Transverse colon (tissue), 4 donors: ENCODE measurements at regions of chr14 and their contacts with region 1.

Region 1: DNA sequence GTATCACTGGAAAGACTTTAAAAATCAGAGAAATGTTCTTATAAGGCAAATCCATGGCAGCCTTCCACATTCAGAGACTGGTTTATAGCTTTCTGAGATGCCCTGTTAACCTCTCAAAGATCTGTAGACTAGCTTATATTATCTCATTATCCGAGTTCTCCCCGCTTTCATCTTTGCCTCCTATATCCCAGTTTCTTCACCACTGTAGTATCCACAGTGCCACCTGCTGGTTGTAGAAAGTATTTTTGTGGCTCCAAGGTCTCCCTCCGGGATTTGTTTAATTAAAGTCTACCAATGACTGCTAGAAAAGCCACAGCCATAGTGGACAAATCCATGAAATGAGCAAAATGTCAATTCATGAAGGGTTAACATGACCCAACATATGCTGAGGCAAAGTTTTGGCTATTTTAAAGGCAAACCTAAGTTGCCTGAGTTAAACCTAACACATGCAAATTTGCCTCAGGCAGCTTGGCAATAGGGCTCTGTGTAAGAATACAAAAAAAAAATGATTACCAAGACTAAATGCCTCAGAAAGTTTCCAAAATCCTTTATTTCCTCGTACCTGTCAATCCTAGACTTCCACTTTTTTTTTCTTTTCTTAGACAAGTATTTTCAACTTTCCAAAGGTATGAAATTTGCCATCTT is 218.8 kb upstream of the BMP4 start:
- DNase-seq: peak; percentile 67
- H3K4me3 ChIP-seq: no peak overlapping the region
- H3K27ac ChIP-seq: peak overlapping the region in 2 of 4 donors; percentile 1 to 39
- H3K4me1 ChIP-seq: peaks cover 12 to 34% (median 21%) of the 10 kb centered on the region in 4 donors
- H3K27me3 ChIP-seq: no peaks in the 10 kb centered on the region
- CTCF ChIP-seq: peak; percentile 83 to 89 (median 86)
- EP300 ChIP-seq: no peak
- POLR2A ChIP-seq: no peak

Region 2: GRCh38 chr14:53539489-53540126 is 635.8 kb before region 1 on chr14:
- in situ Hi-C with region 1: loop called in 3 of 4 experiments (anchors 25 kb)
- intact Hi-C with region 1: loop called (anchors 10 kb)
- DNase-seq: peak; percentile 78
- H3K4me3 ChIP-seq: no peak overlapping the region
- H3K27ac ChIP-seq: peak overlapping the region; percentile 53 to 77 (median 57)
- H3K4me1 ChIP-seq: peaks cover 0 to 38% (median 7%) of the 10 kb centered on the region in 4 donors
- H3K27me3 ChIP-seq: no peaks in the 10 kb centered on the region
- CTCF ChIP-seq: peak; percentile 81 to 88 (median 86)
- EP300 ChIP-seq: no peak
- POLR2A ChIP-seq: no peak

Region 3: DNA sequence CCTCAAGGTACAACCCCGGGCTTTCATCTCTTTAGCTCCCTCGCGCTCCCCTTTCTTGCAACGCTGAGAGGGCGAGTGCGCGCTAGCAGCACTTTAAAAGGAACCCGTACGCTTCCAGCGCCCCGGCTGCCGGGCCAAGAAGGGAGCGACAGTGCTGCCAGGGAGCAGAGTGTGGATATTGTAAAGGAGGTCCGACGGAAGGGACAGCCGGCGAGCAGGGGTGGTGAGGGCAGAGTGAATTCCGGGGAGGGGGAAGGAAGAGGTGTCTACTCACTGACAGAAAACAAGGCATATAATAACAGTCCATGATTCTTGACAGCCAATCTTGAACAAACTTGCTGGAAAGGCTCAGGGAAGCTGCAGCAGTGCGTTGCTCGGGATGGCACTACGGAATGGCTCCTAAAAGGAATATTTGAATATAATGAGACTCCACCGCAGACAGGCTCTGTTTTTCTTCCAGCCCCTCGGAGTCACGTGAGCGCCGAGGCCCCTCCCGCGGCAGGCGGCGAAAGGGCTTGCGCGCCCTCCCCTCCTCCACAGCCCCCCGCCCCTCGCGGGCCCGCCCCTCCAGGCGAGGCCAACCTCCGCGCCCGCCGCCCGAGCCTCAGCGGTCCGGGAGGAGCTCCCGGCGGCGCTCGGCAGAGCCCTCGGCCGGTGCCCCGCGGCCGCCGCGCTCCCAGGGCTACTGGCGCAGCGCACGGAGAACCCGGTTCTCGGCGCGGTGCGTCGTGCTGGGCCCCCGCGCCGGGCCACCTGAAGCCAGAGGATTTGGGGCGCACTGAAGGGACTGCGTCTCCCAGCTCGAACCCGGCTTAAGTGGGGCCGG is 222.2 kb before region 1 on chr14:
- in situ Hi-C with region 1: no loop called
- intact Hi-C with region 1: loop called (anchors 10 kb)
- DNase-seq: peak; percentile 78
- H3K4me3 ChIP-seq: peak overlapping the region; percentile 54 to 71 (median 57)
- H3K27ac ChIP-seq: peak overlapping the region; percentile 80 to 89 (median 83)
- H3K4me1 ChIP-seq: peaks cover 4 to 43% (median 34%) of the 10 kb centered on the region in 4 donors
- H3K27me3 ChIP-seq: peaks cover 42% of the 10 kb centered on the region
- CTCF ChIP-seq: no peak
- EP300 ChIP-seq: no peak
- POLR2A ChIP-seq: peak; percentile 61

Region 4: DNA sequence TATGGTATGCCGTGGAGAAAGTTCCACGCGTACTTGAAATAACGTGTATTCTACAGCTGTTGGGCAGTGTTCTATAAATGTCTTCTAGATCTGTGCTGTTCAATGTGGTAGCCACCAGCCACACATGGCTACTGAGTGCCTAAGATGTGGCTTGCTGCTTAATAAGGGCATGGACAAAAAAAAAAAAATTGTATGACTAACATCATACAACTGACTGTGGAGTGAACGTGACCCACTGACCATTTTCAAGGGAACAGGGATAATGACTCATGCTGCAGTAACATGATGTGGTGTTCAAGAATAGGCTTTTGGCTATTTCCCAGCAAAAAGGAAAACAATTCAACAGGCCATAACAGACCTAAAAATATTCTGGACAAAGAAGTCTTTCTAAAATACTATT is 1223.3 kb after region 1 on chr14:
- in situ Hi-C with region 1: no loop called
- intact Hi-C with region 1: no loop called
- DNase-seq: no peak
- H3K4me3 ChIP-seq: no peak overlapping the region
- H3K27ac ChIP-seq: peak overlapping the region in 1 of 4 donors; percentile 16
- H3K4me1 ChIP-seq: peaks cover 0 to 13% (median 0%) of the 10 kb centered on the region in 4 donors
- H3K27me3 ChIP-seq: no peaks in the 10 kb centered on the region
- CTCF ChIP-seq: no peak
- EP300 ChIP-seq: no peak
- POLR2A ChIP-seq: no peak